ENCODE measurements at regions of chr9 and their contacts with region 1.

Region 1: GRCh38 chr9:2066312-2067273 is 51.4 kb downstream of the SMARCA2 start:
- DNase-seq: no peak
- H3K4me3 Mint-ChIP-seq: no peak overlapping the region
- H3K27ac Mint-ChIP-seq: no peak overlapping the region
- H3K4me1 Mint-ChIP-seq: peaks cover 13% of the 10 kb centered on the region
- H3K27me3 Mint-ChIP-seq: no peaks in the 10 kb centered on the region

Region 2: GRCh38 chr9:1460143-1460769 is 606.3 kb before region 1 on chr9:
- CTCF ChIA-PET with region 1: no interaction called
- intact Hi-C with region 1: loop called (anchors 2 kb)
- DNase-seq: peak; percentile 27
- H3K4me3 Mint-ChIP-seq: no peak overlapping the region
- H3K27ac Mint-ChIP-seq: no peak overlapping the region
- H3K4me1 Mint-ChIP-seq: no peaks in the 10 kb centered on the region
- H3K27me3 Mint-ChIP-seq: peaks cover 9% of the 10 kb centered on the region

Region 3: DNA sequence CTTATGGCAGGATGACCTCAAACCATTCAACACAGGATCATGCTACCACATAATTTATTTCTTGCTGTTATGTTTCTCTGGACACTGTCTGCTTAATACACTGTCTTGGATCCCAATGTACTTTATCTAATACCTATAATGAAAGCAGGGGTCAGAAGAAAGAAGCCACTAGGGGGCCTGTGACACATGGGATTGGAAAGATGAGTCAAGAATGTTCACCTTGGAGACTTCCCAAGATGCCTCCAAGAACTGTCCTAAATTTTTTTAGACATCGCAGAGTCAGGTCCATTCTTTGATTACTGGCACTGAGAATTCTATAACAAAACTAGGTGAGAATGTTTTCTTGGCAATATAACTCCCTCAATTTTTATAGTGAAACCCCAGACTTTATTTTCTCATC is 357.2 kb before region 1 on chr9:
- CTCF ChIA-PET with region 1: no interaction called
- intact Hi-C with region 1: loop called (anchors 1 kb)
- DNase-seq: peak; percentile 27
- H3K4me3 Mint-ChIP-seq: no peak overlapping the region
- H3K27ac Mint-ChIP-seq: no peak overlapping the region
- H3K4me1 Mint-ChIP-seq: no peaks in the 10 kb centered on the region
- H3K27me3 Mint-ChIP-seq: peaks cover 26% of the 10 kb centered on the region

Region 4: DNA sequence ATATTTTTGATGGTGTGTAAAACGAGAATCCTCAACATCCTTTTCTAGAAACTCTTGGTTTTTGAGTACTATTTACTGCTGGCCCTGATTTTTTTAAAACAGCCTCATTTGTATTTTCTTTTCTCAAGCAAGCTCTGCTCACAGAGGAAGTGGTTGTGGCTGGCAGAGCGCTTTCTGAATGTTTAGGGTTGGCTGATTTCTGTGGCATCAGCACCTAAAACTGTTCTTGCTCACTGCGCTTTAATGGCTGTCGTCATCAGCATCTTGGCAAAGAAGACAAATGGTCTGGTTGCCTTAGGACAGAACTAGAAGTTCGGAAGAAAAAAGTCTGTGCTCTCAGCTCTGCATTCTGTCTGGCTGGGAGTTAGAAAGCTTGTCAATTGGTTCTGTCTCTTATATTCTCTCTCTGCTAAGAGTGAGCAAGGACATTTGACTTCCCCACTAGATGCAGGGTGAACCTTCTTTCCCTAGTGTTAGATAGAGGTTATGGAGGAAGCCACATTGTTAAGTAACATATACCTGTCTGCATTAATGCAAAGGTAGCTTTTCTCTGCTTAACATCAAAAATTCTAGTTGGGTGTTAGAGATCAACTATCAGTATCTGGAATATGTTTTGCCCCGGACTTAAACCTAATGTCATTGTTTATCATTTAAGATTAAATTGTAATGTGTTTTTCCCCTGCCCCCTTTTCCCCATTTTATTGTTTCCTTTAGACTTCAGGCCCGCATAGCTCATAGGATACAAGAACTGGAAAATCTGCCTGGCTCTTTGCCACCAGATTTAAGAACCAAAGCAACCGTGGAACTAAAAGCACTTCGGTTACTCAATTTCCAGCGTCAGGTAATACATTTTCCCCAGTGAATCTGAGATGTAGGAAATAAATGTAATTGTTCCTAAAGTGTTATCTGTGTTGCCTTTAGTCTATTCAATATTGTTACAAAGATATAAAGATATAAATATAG is 12.4 kb before region 1 on chr9:
- CTCF ChIA-PET with region 1: interaction called, 6 read pairs
- intact Hi-C with region 1: loop called (anchors 1 kb)
- DNase-seq: peak; percentile 89
- H3K4me3 Mint-ChIP-seq: peak overlapping the region; percentile 5
- H3K27ac Mint-ChIP-seq: peak overlapping the region; percentile 83
- H3K4me1 Mint-ChIP-seq: peaks cover 53% of the 10 kb centered on the region
- H3K27me3 Mint-ChIP-seq: no peaks in the 10 kb centered on the region

Region 5: GRCh38 chr9:2907411-2907810 is 840.8 kb after region 1 on chr9:
- CTCF ChIA-PET with region 1: no interaction called
- intact Hi-C with region 1: no loop called
- DNase-seq: no peak
- H3K4me3 Mint-ChIP-seq: no peak overlapping the region
- H3K27ac Mint-ChIP-seq: no peak overlapping the region
- H3K4me1 Mint-ChIP-seq: no peaks in the 10 kb centered on the region
- H3K27me3 Mint-ChIP-seq: peaks cover 14% of the 10 kb centered on the region

Measured in activated naive CD4-positive, alpha-beta T cell treated with anti-CD3 and anti-CD28 coated beads for 36 hours (primary cell).